Dendritic cell treated with granulocyte-macrophage colony-stimulating factor and Interleukin-4, amounts not matched to agents 40 ng/mL and 50 ng/mL, for 4 days (primary cell): ENCODE measurements at regions of chr1 and their contacts with region 1.

Region 1: GRCh38 chr1:108199781-108200570 is at the start of gene SLC25A24:
- H3K4me3 Mint-ChIP-seq: peak within 1 kb of the TSS; percentile 96
- H3K27ac Mint-ChIP-seq: peak within 1 kb of the TSS; percentile 99
- H3K4me1 Mint-ChIP-seq: peaks cover 49% of the 10 kb centered on the region
- H3K27me3 Mint-ChIP-seq: peaks cover under 1% of the 10 kb centered on the region

Region 2: DNA sequence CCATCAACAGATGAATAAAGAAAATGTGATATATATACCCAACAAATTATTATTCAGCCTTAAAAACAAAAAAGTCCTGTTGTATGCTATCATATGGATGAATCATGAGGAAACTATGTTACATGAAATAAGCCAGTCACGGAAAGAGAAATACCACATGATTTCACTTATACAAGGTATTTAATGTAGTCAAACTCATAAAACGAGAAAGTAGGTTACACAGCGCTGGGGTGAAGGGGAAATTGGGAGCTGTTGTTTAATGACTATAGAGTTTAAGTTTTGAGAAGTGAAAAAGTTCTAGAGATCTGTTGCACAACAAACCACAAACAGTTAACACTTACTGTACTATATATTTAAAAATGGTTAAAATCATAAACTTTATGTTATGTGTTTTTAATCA is 58.4 kb before region 1 on chr1:
- intact Hi-C with region 1: loop called (anchors 5 kb)
- H3K4me3 Mint-ChIP-seq: no peak overlapping the region
- H3K27ac Mint-ChIP-seq: peak overlapping the region; percentile 77
- H3K4me1 Mint-ChIP-seq: peaks cover 50% of the 10 kb centered on the region
- H3K27me3 Mint-ChIP-seq: no peaks in the 10 kb centered on the region